SK-N-SH (cell line): ENCODE measurements at regions of chr7 and their contacts with region 1.

Region 1: GRCh38 chr7:127598318-127598717 is 4.8 kb downstream of the FSCN3 start:
- DNase-seq: no peak
- H3K4me3 ChIP-seq: no peak overlapping the region
- H3K27ac ChIP-seq: no peak overlapping the region
- H3K4me1 ChIP-seq: no peaks in the 10 kb centered on the region
- H3K27me3 ChIP-seq: no peaks in the 10 kb centered on the region
- CTCF ChIP-seq: peak; percentile 42
- EP300 ChIP-seq: no peak
- RAD21 ChIP-seq: peak; percentile 23; the same call in 1 of the 2 replicates

Region 2: DNA sequence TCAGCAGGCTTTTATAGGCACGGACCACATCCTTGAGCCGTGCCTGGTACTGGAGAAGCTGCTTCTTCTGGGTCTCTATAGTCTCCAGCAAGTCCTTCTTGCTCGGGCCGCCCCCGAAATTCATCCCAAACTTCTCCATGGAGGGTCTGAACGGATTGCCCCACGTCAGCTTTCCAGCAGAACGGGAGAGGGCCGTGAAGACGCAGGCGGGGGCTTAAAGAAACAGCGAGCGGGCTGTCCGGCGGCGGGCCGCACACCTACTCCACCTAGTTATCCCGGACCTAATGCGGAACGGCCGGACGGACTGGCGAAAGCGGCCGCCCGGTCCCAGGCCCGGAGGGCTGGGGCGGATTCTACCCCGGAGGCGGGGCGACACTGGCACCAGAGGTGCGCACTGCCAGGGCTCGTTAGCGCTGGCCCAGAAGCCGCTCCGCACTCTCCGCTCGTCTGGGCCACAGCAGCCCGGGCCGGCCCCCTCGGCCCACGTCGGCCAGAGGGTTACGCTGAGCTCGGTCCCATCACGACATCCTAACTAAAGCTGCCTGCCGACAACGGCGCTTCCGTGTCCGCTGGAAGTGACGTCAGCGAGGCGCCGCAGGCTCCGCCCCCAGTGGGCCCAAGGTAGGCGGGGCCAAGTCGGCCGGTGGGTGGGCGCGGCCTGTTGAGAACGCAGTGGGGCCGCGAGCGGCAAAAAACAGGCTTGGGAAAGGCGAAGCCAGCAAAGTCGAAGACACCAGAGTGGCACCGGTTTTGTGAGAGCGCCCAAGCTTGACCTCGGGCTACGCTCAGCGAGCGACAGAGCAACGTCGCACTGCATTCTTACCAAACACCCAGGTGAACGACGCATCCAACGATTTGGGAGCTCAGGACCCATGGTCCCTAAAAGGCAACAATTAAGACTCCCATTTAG is 13.0 kb before region 1 on chr7 and contains the start of gene GCC1:
- CTCF ChIA-PET with region 1: interaction called, 10 read pairs
- POLR2A ChIA-PET with region 1: interaction called, 3 read pairs
- DNase-seq: peak; percentile 99
- H3K4me3 ChIP-seq: peak within 1 kb of the TSS; percentile 95 to 100
- H3K27ac ChIP-seq: peak within 1 kb of the TSS; percentile 67 to 77
- H3K4me1 ChIP-seq: peaks cover 10 to 59% of the 10 kb centered on the region in 2 experiments; a peak in 3 of 4 replicates
- H3K27me3 ChIP-seq: no peaks in the 10 kb centered on the region
- CTCF ChIP-seq: no peak
- EP300 ChIP-seq: peak in 1 of 2 experiments; percentile 20; a peak in 1 of 4 replicates
- RAD21 ChIP-seq: no peak
- polyA plus RNA-seq, gene GCC1: 8.4 and 10.3 TPM in 2 replicates